CD4-positive, alpha-beta T cell (primary cell): ENCODE measurements at regions of chr9 and their contacts with region 1.

Region 1: GRCh38 chr9:34989003-34989945 is at the start of gene DNAJB5:
- DNase-seq: peak; percentile 93 to 99 (median 95)
- ATAC-seq: peak; percentile 90
- H3K4me3 ChIP-seq: peak within 1 kb of the TSS; percentile 78
- H3K4me3 Mint-ChIP-seq: peak within 1 kb of the TSS; percentile 94
- H3K27ac ChIP-seq: peak within 1 kb of the TSS; percentile 62 to 63
- H3K27ac Mint-ChIP-seq: peak within 1 kb of the TSS; percentile 84
- H3K4me1 ChIP-seq: peaks cover 51% of the 10 kb centered on the region
- H3K4me1 Mint-ChIP-seq: peaks cover 51% of the 10 kb centered on the region
- H3K27me3 ChIP-seq: no peaks in the 10 kb centered on the region
- H3K27me3 Mint-ChIP-seq: no peaks in the 10 kb centered on the region
- CTCF ChIP-seq: no peak
- total RNA-seq, gene DNAJB5: 2.7 to 2.8 TPM

Region 2: GRCh38 chr9:35096035-35096849 is 107.0 kb after region 1 on chr9 and contains the start of gene PIGO:
- CTCF ChIA-PET with region 1: interaction called, 3 read pairs
- POLR2A ChIA-PET with region 1: no interaction called
- intact Hi-C with region 1: loop called (anchors 1 to 5 kb)
- DNase-seq: peak; percentile 81 to 95 (median 88)
- ATAC-seq: peak; percentile 88
- H3K4me3 ChIP-seq: peak within 1 kb of the TSS; percentile 82
- H3K4me3 Mint-ChIP-seq: peak within 1 kb of the TSS; percentile 92
- H3K27ac ChIP-seq: peak within 1 kb of the TSS; percentile 96 to 99
- H3K27ac Mint-ChIP-seq: peak within 1 kb of the TSS; percentile 93
- H3K4me1 ChIP-seq: peaks cover 26% of the 10 kb centered on the region
- H3K4me1 Mint-ChIP-seq: peaks cover 43% of the 10 kb centered on the region
- H3K27me3 ChIP-seq: no peaks in the 10 kb centered on the region
- H3K27me3 Mint-ChIP-seq: no peaks in the 10 kb centered on the region
- CTCF ChIP-seq: peak; percentile 81
- total RNA-seq, gene PIGO: 17.5 to 18.9 TPM

Region 3: GRCh38 chr9:35161713-35162604 is 172.7 kb after region 1 on chr9 and contains the start of gene UNC13B:
- CTCF ChIA-PET with region 1: no interaction called
- POLR2A ChIA-PET with region 1: no interaction called
- intact Hi-C with region 1: loop called in 1 of 2 experiments (anchors 5 kb)
- DNase-seq: peak; percentile 37 to 88 (median 66)
- ATAC-seq: peak; percentile 83
- H3K4me3 ChIP-seq: peak within 1 kb of the TSS; percentile 87
- H3K4me3 Mint-ChIP-seq: peak within 1 kb of the TSS; percentile 98
- H3K27ac ChIP-seq: no peak within 1 kb of the TSS
- H3K27ac Mint-ChIP-seq: peak within 1 kb of the TSS; percentile 21
- H3K4me1 ChIP-seq: peaks cover 27% of the 10 kb centered on the region
- H3K4me1 Mint-ChIP-seq: peaks cover 35% of the 10 kb centered on the region
- H3K27me3 ChIP-seq: no peaks in the 10 kb centered on the region
- H3K27me3 Mint-ChIP-seq: no peaks in the 10 kb centered on the region
- CTCF ChIP-seq: no peak
- total RNA-seq, gene UNC13B: 0.38 to 0.84 TPM